Activated T-helper 2 cell treated with anti-CD3 and anti-CD28 coated beads, Interferon-gamma antibody, Interleukin-2, Interleukin-4, amounts not matched to agents 10 μg/mL and 5 μg/mL and 100 μg/mL, durations not matched to agents 14 hours and 24 hours and 36 hours (primary cell): ENCODE measurements at regions of chr3 and their contacts with region 1.

Region 1: DNA sequence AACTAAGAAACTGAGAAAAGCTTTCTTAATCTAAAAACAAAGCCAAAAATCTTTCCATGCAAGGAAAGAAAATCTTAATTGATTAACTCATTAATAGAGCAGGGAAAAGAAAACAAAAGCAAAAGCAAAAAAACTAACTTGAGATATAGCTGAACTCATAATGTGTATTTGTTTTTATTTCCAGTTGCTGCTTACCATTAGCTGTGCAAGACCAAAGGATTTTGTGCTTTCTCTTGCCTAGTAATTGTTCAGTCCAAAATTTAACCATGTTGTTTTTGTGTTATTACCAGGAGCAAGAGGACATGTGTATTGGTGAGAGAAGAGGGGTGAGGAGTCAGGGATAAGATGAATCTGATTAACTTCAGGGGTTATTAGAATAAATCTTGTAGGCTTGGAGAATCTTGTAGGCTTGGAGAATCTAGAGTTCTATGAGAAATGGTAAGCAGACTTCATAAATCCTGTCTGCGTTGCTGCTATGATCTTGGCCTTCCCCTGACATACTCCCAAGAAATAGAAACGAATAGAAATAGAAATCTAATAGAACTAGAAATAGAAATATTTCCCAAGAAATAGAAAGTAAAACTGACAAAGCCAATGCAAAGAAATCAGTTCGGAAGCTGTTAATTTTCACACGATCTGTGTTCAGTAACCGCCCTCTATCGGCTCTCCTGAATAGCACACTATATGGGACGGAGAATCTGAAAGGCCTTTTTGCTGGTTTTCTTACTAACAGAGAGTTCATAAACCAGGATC is 72.6 kb upstream of the TNFSF10 start:
- DNase-seq: peak; percentile 31
- H3K4me3 Mint-ChIP-seq: peak overlapping the region; percentile 77
- H3K27ac Mint-ChIP-seq: peak overlapping the region; percentile 66
- H3K4me1 Mint-ChIP-seq: peaks cover 54% of the 10 kb centered on the region
- H3K27me3 Mint-ChIP-seq: peaks cover 2% of the 10 kb centered on the region

Region 2: GRCh38 chr3:172129870-172130683 is 465.7 kb before region 1 on chr3:
- intact Hi-C with region 1: loop called (anchors 10 kb)
- DNase-seq: peak; percentile 36
- H3K4me3 Mint-ChIP-seq: no peak overlapping the region
- H3K27ac Mint-ChIP-seq: peak overlapping the region; percentile 82
- H3K4me1 Mint-ChIP-seq: peaks cover 60% of the 10 kb centered on the region
- H3K27me3 Mint-ChIP-seq: no peaks in the 10 kb centered on the region

Region 3: DNA sequence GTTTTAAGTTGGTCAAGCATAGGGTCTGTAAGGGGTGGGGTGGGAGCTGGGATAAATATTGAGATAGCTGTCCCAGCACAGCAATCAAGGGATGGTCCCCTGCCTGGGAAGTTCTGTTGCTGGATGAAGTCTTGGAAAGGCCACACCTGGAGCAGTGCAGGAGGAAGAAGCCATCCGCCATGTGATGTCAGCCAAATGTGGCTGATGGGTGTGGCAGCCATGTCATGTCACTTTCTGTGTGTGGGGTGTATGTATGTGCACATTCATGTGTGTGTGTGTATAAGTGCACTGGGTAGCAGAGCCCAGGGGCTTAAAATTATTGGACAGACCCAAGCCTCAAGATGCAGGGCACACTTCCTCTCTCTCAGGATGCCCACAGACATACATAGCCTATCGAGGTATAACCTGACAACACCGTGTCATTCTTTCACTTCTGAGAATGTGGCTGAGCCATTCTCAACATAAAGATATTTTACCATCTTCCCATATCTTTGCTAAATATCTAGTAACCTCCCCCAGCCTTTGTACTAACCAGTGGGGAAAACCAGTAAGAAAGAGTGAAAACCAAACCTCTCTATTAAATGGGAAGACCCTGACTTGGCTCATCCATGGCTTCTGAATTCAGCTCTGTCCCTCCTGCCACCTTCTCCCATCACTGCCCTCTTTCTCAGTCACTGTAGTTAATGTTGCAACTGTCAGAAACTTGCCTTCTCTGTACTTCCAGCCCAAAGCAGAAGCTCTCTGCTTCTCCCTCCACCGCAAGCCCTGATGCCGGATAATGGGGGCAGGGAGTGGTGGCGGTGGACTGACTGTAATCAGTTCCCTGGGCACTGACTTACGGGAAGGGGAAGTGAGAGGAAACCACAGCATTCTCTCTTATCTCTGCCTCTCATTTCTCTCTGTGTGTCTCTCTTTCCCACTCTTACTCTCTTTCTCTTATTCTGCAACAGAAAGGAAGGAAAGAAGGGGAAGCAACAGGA is 83.7 kb before region 1 on chr3:
- intact Hi-C with region 1: loop called (anchors 1 kb)
- DNase-seq: peak; percentile 63
- H3K4me3 Mint-ChIP-seq: peak overlapping the region; percentile 43
- H3K27ac Mint-ChIP-seq: peak overlapping the region; percentile 90
- H3K4me1 Mint-ChIP-seq: peaks cover 75% of the 10 kb centered on the region
- H3K27me3 Mint-ChIP-seq: no peaks in the 10 kb centered on the region

Region 4: GRCh38 chr3:172550347-172550943 is 45.4 kb before region 1 on chr3:
- intact Hi-C with region 1: loop called (anchors 1 kb)
- DNase-seq: peak; percentile 55
- H3K4me3 Mint-ChIP-seq: no peak overlapping the region
- H3K27ac Mint-ChIP-seq: peak overlapping the region; percentile 67
- H3K4me1 Mint-ChIP-seq: peaks cover 48% of the 10 kb centered on the region
- H3K27me3 Mint-ChIP-seq: no peaks in the 10 kb centered on the region

Region 5: GRCh38 chr3:172580680-172581401 is 15.0 kb before region 1 on chr3:
- intact Hi-C with region 1: loop called (anchors 1 kb)
- DNase-seq: no peak
- H3K4me3 Mint-ChIP-seq: peak overlapping the region; percentile 49
- H3K27ac Mint-ChIP-seq: peak overlapping the region; percentile 82
- H3K4me1 Mint-ChIP-seq: peaks cover 91% of the 10 kb centered on the region
- H3K27me3 Mint-ChIP-seq: no peaks in the 10 kb centered on the region

Region 6: DNA sequence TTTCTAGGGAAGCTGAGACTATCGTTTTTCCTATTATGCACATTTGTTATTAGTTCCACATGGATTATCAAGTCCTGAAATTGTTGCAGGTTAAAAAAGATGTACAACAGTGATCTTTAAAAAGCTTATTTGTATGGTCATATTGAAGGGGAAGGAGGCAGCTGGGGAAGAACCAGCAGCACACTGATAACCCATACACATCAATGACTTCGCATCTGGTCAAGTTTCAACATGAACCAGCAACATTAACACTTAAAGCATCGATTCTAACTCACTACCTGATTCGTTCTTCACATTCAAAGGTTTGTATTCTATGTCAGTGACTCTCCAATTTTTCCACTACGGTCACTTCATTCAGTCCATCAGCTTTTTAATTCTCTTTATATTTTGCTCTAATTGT is 58.7 kb after region 1 on chr3:
- intact Hi-C with region 1: no loop called
- DNase-seq: no peak
- H3K4me3 Mint-ChIP-seq: no peak overlapping the region
- H3K27ac Mint-ChIP-seq: no peak overlapping the region
- H3K4me1 Mint-ChIP-seq: no peaks in the 10 kb centered on the region
- H3K27me3 Mint-ChIP-seq: no peaks in the 10 kb centered on the region

Region 7: GRCh38 chr3:172666873-172667694 is 71.3 kb after region 1 on chr3:
- intact Hi-C with region 1: loop called (anchors 1 kb)
- DNase-seq: peak; percentile 66
- H3K4me3 Mint-ChIP-seq: no peak overlapping the region
- H3K27ac Mint-ChIP-seq: no peak overlapping the region
- H3K4me1 Mint-ChIP-seq: peaks cover 6% of the 10 kb centered on the region
- H3K27me3 Mint-ChIP-seq: peaks cover 14% of the 10 kb centered on the region